HEK293 (cell line): ENCODE measurements at regions of chr5 and their contacts with region 1.

Region 1: DNA sequence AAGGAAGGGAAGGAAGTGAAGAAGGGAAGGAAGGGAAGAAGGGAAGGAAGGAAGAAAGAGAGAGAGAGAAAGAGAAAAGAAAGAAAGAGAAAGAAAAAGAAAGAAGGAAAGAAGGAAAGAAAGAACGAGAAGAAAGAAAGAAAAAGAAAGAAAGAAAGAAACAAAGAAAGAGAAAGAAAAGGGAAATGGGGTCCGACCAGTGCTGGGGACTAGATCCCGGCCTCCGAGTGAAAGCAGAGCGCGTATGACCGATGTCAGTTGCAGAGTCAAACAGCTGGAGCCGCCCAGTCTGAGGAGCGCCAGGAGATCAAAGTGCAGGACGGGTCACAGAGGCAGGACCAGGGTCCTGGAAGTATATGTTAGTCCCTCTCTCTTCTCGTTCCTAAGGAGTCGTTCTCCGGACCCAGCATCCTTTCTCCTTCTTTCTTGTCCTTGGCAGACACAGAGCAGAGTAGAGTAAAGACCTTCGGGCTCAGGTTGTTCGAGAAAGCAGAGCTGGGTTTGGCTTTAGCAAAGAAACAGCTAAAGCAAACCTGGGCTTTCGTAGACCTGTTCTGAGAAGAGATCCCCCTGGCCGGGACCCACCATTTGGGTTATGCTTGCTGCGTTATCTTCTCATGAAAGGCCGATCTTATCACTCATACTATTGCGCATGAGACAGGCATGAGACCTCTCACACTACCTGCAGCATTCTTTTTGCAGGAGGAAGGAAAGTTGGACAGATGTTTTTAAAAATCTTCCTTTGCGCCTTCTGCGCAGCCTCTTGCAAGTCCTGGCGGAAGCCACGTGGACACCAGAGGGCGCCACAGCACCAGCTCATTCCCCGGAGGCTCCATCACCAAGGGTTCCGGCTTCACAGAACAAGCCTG is 305.2 kb upstream of the MSX2 start:
- H3K4me3 ChIP-seq: no peak overlapping the region; the same call in 1 of the 2 replicates
- H3K27ac ChIP-seq: peak overlapping the region; percentile 49; the same call in 1 of the 2 replicates
- H3K4me1 ChIP-seq: peaks cover 7% of the 10 kb centered on the region; the same call in 1 of the 2 replicates
- CTCF ChIP-seq: peak; percentile 94

Region 2: DNA sequence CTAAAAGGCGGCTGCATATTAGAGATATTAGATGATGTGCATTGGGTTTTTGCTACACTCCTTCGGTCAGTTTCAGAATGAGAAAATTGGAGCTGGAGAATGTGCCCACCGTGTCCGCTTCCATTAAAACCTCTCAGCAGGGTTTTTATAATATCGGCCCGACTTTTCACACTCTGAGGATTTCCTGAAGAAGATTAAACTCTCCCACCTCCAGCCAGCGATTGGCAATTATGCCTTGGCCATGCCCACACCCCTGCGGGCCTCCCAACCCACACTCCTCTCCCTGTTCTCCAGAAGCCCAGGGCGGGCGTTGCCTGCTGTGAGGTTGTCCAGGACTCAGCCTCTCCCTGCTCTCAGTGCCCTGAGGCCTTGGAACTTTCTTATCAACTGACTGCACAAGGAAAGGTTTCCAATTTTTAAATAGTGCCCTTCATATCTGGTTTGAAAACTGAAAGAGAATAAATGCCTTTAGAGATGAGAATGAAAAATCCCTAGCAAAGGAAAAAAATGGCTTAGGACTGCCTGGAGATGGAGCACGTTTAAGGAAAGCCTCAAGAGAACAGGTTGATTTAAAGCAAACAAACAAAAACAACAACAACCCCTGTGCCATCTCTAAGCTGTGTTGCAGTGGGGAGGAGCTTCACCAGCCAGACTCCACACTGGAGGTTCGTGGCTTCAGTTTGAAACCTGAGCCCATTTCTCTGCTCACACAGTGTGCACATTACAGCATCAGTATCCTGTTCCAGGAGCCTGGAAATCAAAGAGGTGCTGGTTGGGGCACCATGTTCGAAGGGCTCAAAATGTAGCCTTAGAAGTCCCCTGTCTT is 80.8 kb before region 1 on chr5:
- CTCF ChIA-PET with region 1: interaction called, 7 read pairs
- POLR2A ChIA-PET with region 1: interaction called, 12 read pairs
- H3K4me3 ChIP-seq: peak overlapping the region; percentile 55
- H3K27ac ChIP-seq: peak overlapping the region; percentile 87
- H3K4me1 ChIP-seq: peaks cover 18% of the 10 kb centered on the region
- CTCF ChIP-seq: no peak

Region 3: DNA sequence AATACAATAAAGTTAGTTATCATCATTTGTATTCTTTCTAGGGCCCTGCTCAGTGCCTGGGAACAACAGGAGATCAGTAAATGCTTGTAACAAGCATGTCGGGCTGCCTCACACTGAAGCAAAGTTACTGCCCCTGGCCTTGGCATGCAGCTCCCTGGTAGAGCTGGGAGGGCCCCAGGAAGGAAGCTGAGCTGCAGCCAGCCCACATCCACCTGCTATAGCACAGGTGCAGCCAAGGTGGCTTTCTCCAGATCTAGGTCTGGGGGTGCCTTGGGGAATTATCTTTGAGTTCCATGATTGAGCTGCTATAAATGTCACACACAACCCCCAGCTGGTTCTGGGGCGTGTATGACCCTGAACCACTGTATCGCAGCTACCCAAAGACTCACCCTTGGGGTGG is 11.8 kb after region 1 on chr5:
- CTCF ChIA-PET with region 1: interaction called, 24 read pairs
- POLR2A ChIA-PET with region 1: interaction called, 3 read pairs
- H3K4me3 ChIP-seq: no peak overlapping the region
- H3K27ac ChIP-seq: no peak overlapping the region
- H3K4me1 ChIP-seq: 0 out of 2 replicates have a peak, but pooled peaks cover 2% of the 10 kb centered on the region
- CTCF ChIP-seq: no peak

Region 4: GRCh38 chr5:174724491-174725260 is 305.5 kb after region 1 on chr5 and contains the start of gene MSX2:
- CTCF ChIA-PET with region 1: interaction called, 4 read pairs
- POLR2A ChIA-PET with region 1: interaction called, 12 read pairs
- H3K4me3 ChIP-seq: peak within 1 kb of the TSS; percentile 80
- H3K27ac ChIP-seq: peak within 1 kb of the TSS; percentile 87
- H3K4me1 ChIP-seq: peaks cover 35% of the 10 kb centered on the region
- CTCF ChIP-seq: peak; percentile 56; the same call in 1 of the 2 replicates

Region 5: GRCh38 chr5:174793684-174794328 is 374.6 kb after region 1 on chr5:
- CTCF ChIA-PET with region 1: interaction called, 58 read pairs
- POLR2A ChIA-PET with region 1: interaction called, 3 read pairs
- H3K4me3 ChIP-seq: no peak overlapping the region
- H3K27ac ChIP-seq: no peak overlapping the region
- H3K4me1 ChIP-seq: no peaks in the 10 kb centered on the region
- CTCF ChIP-seq: peak; percentile 81